Panc1 (cell line): ENCODE measurements at regions of chr1 and their contacts with region 1.

Region 1: DNA sequence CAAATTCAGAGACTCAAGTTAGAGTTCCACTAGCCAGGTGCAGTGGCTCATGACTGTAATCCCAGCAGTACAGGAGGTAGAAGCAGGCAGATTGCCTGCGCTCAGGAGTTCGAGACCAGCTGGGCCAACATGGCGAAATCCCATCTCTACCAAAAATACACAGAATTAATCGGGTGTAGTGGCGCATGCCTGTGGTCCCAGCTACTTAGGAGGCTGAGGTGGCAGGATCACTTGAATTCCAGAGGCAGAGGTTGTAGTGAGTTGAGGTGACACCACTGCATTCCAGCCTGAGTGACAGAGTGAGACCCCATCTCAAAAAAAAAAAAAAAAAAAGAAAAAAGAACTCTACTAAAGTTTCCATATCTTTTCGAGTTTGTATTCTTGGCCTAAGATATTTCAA is 36.7 kb upstream of the CHRM3 start:
- DNase-seq: no peak
- ATAC-seq: no peak
- H3K4me3 ChIP-seq: no peak overlapping the region
- H3K27ac ChIP-seq: no peak overlapping the region
- H3K4me1 ChIP-seq: no peaks in the 10 kb centered on the region
- H3K27me3 ChIP-seq: no peaks in the 10 kb centered on the region
- CTCF ChIP-seq: no peak

Region 2: GRCh38 chr1:239322369-239322768 is 27.3 kb before region 1 on chr1:
- CTCF ChIA-PET with region 1: no interaction called
- POLR2A ChIA-PET with region 1: no interaction called
- in situ Hi-C with region 1: no loop called
- intact Hi-C with region 1: no loop called
- DNase-seq: no peak
- ATAC-seq: no peak
- H3K4me3 ChIP-seq: no peak overlapping the region
- H3K27ac ChIP-seq: no peak overlapping the region
- H3K4me1 ChIP-seq: no peaks in the 10 kb centered on the region
- H3K27me3 ChIP-seq: no peaks in the 10 kb centered on the region
- CTCF ChIP-seq: no peak

Region 3: DNA sequence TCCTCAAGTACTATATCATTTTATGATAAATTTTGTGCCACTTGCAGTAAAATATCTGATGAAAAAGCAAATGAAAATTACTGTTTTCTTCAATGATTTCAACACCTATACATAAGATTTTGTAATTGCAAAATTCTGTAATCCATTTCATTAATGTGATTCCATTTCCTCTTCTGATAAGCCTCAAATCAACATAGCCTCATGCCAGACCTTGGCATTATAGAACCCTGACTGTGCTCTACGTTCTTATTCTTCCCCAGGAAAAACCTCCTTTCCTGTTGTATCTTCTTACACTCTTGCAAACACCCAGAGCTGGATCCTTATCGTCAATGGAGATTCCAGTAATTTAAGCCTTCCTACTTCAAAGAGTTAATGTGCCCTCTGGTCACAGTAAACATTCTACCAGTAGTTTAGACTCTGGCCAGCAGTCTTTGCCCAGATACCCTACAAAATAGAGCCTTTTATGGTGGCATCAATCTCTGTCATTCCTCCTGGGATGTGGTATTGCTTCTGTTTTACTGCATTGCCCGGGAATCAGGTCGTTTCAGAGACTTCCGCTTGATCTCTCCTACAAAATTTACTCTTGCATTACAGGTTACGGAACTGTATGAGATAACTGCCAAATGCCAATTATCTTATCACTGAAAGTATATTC is 11.8 kb before region 1 on chr1:
- CTCF ChIA-PET with region 1: no interaction called
- POLR2A ChIA-PET with region 1: interaction called, 12 read pairs
- in situ Hi-C with region 1: no loop called
- intact Hi-C with region 1: no loop called
- DNase-seq: no peak
- ATAC-seq: no peak
- H3K4me3 ChIP-seq: no peak overlapping the region
- H3K27ac ChIP-seq: no peak overlapping the region
- H3K4me1 ChIP-seq: no peaks in the 10 kb centered on the region
- H3K27me3 ChIP-seq: no peaks in the 10 kb centered on the region
- CTCF ChIP-seq: no peak